ENCODE measurements at regions of chr10 and their contacts with region 1.

Region 1: DNA sequence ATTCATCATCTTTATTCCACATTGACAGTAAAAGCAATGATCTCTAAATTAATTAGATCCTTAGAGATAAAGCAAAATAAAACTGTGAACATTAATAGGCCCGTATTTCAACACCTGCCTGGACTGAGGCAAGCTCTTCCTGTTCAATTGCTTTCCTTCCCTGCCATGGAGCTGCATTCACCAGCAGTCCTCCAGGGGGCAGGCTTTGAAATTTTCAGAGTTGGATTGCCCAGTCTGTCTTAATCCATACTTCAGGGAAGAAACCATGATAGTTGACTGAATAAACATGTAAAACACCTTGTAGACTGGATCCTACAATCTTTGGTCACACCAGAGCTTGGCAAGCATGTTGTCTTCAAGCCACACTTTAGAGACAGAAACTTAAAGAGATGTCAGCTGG is 936.6 kb downstream of the NRG3 start:
- DNase-seq: peak; percentile 74
- ATAC-seq: peak; percentile 92
- H3K4me3 Mint-ChIP-seq: no peak overlapping the region
- H3K27ac Mint-ChIP-seq: no peak overlapping the region
- H3K4me1 Mint-ChIP-seq: no peaks in the 10 kb centered on the region
- H3K27me3 Mint-ChIP-seq: no peaks in the 10 kb centered on the region
- CTCF ChIP-seq: peak; percentile 72

Region 2: GRCh38 chr10:82796510-82796909 is 15.1 kb before region 1 on chr10:
- CTCF ChIA-PET with region 1: interaction called, 13 read pairs
- POLR2A ChIA-PET with region 1: no interaction called
- DNase-seq: no peak
- ATAC-seq: peak; percentile 52; the same call in 1 of the 2 replicates
- H3K4me3 Mint-ChIP-seq: no peak overlapping the region
- H3K27ac Mint-ChIP-seq: no peak overlapping the region
- H3K4me1 Mint-ChIP-seq: peaks cover 9% of the 10 kb centered on the region
- H3K27me3 Mint-ChIP-seq: no peaks in the 10 kb centered on the region
- CTCF ChIP-seq: no peak

Region 3: DNA sequence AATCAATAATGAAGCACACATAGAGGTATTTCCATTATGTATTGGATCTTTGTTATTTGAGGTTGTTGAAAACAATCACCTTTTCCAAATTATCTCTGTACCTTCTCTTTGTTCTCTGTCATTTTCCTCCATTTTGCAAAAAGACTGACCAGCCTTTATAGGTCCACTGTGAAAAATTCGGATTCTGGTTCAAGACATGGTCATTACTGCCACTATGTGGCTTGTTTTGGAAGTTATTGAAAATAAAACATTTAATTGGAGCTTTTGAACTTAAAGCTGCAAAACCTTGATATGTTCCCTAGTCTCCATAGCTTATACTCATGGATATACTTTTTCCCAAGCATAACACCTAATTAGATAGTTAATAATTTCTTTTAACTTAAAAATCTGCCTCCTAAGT is 157.8 kb after region 1 on chr10:
- CTCF ChIA-PET with region 1: interaction called, 19 read pairs
- POLR2A ChIA-PET with region 1: no interaction called
- DNase-seq: no peak
- ATAC-seq: no peak
- H3K4me3 Mint-ChIP-seq: no peak overlapping the region
- H3K27ac Mint-ChIP-seq: no peak overlapping the region; the same call in 1 of the 2 replicates
- H3K4me1 Mint-ChIP-seq: peaks cover 28% of the 10 kb centered on the region
- H3K27me3 Mint-ChIP-seq: no peaks in the 10 kb centered on the region
- CTCF ChIP-seq: no peak

Region 4: DNA sequence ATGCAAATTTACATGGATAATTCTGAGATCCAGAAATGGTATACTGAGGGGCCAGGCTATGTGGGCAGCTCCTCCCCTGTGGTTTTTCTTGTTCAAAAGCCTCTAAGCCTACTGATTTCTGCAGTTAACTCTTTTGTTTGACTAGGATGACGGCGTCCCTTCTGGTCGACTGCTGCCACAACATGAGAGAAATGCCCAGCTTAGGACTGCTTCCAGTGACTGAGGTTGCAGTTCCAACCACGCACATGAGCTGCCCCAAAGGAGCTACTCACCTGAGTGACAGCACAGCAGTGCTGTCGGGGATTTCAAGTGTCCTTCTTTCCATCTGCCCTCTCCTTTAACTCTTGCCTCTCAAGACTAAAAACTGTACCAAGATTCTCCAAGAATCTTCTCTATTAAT is 354.8 kb after region 1 on chr10:
- CTCF ChIA-PET with region 1: interaction called, 17 read pairs
- POLR2A ChIA-PET with region 1: no interaction called
- DNase-seq: peak; percentile 64
- ATAC-seq: peak; percentile 99
- H3K4me3 Mint-ChIP-seq: no peak overlapping the region
- H3K27ac Mint-ChIP-seq: no peak overlapping the region
- H3K4me1 Mint-ChIP-seq: peaks cover 25% of the 10 kb centered on the region
- H3K27me3 Mint-ChIP-seq: no peaks in the 10 kb centered on the region
- CTCF ChIP-seq: peak; percentile 48; the same call in 1 of the 2 replicates